PC-3 (cell line): ENCODE measurements at regions of chr12 and their contacts with region 1.

Region 1: DNA sequence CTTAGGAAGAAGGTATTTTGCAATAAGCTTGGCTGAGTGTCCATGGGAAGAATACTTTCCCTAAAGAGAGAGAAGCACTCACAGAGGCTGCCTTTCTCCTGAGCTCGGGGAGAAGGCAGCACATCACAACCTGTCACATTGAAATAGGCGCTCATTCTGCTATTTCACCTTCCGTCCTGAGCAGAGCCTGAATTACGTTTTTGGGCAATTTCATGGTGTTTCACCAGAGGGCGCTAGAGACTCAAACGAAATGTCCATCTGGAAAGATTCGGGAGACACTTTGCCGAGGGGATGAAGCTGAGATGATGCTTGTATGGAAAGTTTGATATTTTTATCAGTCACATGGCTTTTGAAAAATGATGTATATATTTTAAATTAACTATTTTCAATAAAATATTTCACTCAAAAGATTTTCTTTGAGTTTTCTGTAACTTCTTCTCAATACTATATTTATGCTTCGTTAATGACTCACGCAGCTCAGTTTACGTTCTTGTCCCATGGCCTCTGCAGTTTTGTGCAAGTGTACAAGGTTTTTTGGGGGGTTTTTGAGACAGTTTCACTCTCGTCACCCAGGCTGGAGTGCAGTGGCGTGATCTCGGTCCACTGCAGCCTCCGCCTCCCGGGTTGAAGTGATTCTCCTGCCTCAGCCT is 17.4 kb upstream of the B4GALNT3 start:
- DNase-seq: peak; percentile 82
- ATAC-seq: no peak
- H3K4me3 ChIP-seq: no peak overlapping the region
- H3K27ac ChIP-seq: no peak overlapping the region
- H3K4me1 ChIP-seq: no peaks in the 10 kb centered on the region
- H3K27me3 ChIP-seq: no peaks in the 10 kb centered on the region
- CTCF ChIP-seq: peak; percentile 77

Region 2: GRCh38 chr12:202081-202731 is 240.2 kb before region 1 on chr12:
- CTCF ChIA-PET with region 1: no interaction called
- POLR2A ChIA-PET with region 1: no interaction called
- intact Hi-C with region 1: no loop called
- DNase-seq: peak; percentile 5
- ATAC-seq: no peak
- H3K4me3 ChIP-seq: no peak overlapping the region
- H3K27ac ChIP-seq: no peak overlapping the region
- H3K4me1 ChIP-seq: peaks cover 4% of the 10 kb centered on the region; the same call in 1 of the 2 replicates
- H3K27me3 ChIP-seq: peaks cover 16% of the 10 kb centered on the region
- CTCF ChIP-seq: no peak

Region 3: DNA sequence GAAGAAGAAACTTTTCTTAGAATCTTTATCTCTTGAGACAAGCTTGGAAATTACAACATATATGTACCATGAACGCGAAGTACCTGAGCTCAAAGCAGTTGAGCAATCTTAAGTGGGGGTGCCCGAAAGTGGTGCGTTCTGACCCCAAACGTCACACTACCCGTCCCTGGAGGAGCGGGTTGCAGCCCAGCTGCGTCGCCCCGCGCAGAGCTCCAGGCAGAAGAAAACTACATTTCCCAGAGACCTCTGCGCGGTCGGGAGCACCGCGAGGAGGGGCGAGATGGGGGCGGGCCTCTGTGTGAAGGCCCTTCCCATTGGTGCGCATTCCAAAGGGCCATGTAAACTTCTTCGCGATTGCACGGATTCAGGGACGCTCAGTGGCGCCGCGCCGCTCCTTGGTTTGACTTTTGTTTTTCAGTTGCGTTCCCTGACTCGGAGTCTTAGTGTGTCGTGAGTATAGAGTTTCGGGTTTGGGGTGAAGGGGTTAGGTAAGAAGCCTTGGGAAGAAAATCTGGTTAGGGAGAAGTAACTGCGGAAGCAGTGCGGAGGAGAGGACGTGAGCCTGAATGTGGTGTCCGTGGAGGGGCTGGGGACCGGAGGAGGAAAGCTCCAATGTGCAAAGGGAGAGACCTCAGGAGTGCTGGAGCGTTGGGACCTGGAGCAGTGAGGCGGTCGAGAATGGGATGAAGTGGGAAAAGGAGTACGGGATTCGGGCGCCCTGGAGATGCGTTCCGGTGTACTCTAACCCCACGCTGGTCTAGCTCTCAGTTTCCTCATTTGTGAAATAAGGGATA is 40.9 kb before region 1 on chr12 and contains the start of gene CCDC77:
- CTCF ChIA-PET with region 1: interaction called, 11 read pairs
- POLR2A ChIA-PET with region 1: no interaction called
- intact Hi-C with region 1: no loop called
- DNase-seq: peak; percentile 95
- ATAC-seq: peak; percentile 100
- H3K4me3 ChIP-seq: peak within 1 kb of the TSS; percentile 88
- H3K27ac ChIP-seq: no peak within 1 kb of the TSS; the same call in 1 of the 2 replicates
- H3K4me1 ChIP-seq: peaks cover 14% of the 10 kb centered on the region; the same call in 1 of the 2 replicates
- H3K27me3 ChIP-seq: no peaks in the 10 kb centered on the region
- CTCF ChIP-seq: no peak
- total RNA-seq, gene CCDC77: 8.3 and 10.5 TPM in 2 replicates

Region 4: DNA sequence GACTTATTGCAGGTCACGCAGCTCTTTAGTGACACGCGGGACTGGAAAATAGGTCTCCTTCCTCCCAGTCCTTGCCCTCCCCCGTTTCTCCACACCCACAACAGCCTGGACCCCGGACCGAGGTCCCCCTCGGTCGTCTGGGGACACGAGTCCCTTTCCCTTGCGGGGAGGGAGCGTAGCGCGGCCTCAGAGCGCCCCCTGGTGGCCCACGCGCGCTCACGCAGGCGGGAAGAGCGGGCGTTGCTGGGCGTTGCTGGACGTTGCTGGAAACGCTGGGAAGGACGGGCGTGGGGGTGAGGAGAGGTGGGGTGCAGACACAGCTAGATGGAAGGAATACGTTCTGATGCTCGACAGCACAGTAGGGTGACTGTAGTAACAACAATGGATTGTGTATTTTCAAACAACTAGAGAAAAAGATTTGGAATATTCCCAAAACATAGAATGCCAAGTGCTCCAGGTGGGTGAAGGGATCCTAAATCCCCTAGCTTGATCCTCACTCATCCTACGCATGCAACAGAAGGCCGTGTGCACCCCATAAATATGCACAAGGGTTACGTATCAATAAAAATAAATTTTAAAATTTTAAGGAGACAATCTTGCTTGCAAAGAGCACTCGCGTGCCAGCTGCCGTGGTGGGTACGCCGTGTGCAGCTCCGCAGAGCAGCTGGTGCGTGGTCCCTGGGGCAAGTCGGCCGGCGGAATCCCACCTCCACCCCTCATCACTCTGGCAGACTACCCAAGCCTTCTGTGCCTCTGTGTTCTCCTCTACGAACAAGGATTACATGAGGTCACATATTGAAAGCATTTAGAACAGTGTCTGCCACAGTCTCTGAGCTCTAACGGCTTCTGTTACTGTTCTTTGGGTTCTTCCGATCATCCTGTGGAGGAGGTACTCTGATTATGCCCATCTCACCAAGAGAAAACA is 104.8 kb after region 1 on chr12:
- CTCF ChIA-PET with region 1: interaction called, 7 read pairs
- POLR2A ChIA-PET with region 1: no interaction called
- intact Hi-C with region 1: loop called (anchors 1 kb)
- DNase-seq: peak; percentile 67
- ATAC-seq: peak; percentile 88
- H3K4me3 ChIP-seq: no peak overlapping the region
- H3K27ac ChIP-seq: no peak overlapping the region
- H3K4me1 ChIP-seq: no peaks in the 10 kb centered on the region
- H3K27me3 ChIP-seq: no peaks in the 10 kb centered on the region
- CTCF ChIP-seq: peak; percentile 95